Mammary epithelial cell (primary cell): ENCODE measurements at regions of chr17 and their contacts with region 1.

Region 1: DNA sequence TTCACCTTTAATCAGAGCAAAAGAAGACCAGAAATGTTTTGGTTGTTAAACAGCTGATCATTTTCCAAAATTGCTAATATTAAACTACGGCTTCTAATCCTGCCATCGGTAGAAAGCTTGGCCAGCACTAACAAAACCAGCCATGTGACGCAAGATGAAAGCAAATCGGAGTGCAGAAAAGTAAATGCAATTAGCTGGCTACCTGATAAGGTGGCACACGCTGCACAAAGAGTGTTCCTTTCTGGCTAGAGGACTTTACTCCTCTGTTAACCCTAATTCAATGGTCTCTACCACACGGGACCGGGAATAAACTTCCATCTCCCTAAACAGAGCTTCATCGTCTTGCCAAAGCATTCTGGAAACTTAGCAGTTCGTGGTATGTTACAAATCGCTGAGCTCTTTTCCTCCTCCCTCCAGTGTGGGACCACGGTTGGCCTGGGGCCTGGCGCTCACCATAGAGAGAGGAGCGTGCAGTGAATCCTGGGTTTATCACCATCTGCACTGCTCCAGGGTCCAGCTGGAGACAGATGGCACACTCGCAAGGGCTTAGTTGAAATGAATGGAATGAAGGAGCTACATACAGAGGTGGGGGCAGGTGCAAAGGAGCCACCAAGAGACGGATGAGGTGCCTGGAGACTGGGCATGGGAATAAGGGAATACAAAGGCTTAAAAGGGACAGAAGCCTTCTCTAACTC is 10.1 kb upstream of the COG1 start:
- DNase-seq: no peak
- H3K4me3 ChIP-seq: no peak overlapping the region
- H3K27ac ChIP-seq: no peak overlapping the region
- H3K4me1 ChIP-seq: no peaks in the 10 kb centered on the region
- H3K27me3 ChIP-seq: no peaks in the 10 kb centered on the region
- CTCF ChIP-seq: no peak

Region 2: DNA sequence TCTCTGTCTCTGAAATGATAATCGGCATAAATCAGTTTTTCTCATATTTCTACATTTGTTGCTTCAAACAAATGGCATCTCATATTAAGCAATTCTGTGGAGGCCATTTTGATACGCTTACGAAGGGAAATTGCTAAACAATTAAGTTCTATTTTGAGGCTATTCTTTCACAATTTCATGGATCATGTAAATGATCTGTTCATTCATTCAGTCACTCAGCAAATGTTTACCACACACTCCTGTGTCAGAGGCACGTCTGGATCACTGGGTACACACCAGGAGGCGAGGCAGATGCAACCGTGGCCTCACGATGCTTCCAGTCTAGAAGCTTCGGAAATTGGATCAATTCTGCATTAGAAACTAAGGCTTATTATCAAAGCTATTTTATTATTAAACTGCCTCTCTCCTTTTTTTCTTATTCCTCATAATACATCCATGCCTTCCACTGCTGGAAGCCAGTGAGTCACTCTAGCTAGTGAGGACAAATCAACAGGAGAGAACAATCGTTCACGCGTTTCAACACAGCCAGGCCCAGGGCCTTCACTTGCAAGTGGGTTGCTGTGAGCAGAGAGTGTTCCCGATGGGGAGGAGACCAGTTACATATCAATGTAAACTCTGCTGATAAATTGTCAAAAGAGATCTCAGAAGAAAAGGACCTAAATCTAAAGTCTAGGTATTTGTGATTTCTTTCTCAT is 79.0 kb before region 1 on chr17:
- CTCF ChIA-PET with region 1: no interaction called
- dilution Hi-C with region 1: loop called (anchors 5 kb)
- in situ Hi-C with region 1: no loop called
- intact Hi-C with region 1: no loop called
- DNase-seq: peak; percentile 11
- H3K4me3 ChIP-seq: no peak overlapping the region
- H3K27ac ChIP-seq: no peak overlapping the region
- H3K4me1 ChIP-seq: no peaks in the 10 kb centered on the region
- H3K27me3 ChIP-seq: no peaks in the 10 kb centered on the region
- CTCF ChIP-seq: no peak

Region 3: GRCh38 chr17:73138541-73139138 is 44.1 kb before region 1 on chr17:
- CTCF ChIA-PET with region 1: no interaction called
- dilution Hi-C with region 1: no loop called
- in situ Hi-C with region 1: no loop called
- intact Hi-C with region 1: no loop called
- DNase-seq: no peak
- H3K4me3 ChIP-seq: no peak overlapping the region
- H3K27ac ChIP-seq: no peak overlapping the region
- H3K4me1 ChIP-seq: no peaks in the 10 kb centered on the region
- H3K27me3 ChIP-seq: peaks cover 9% of the 10 kb centered on the region
- CTCF ChIP-seq: no peak